Mammary epithelial cell (primary cell): ENCODE measurements at regions of chr15 and their contacts with region 1.

Region 1: GRCh38 chr15:31412824-31413223 is 86.2 kb downstream of the KLF13 start:
- DNase-seq: peak; percentile 56
- H3K4me3 ChIP-seq: no peak overlapping the region
- H3K27ac ChIP-seq: no peak overlapping the region
- H3K4me1 ChIP-seq: peaks cover 6% of the 10 kb centered on the region
- H3K27me3 ChIP-seq: no peaks in the 10 kb centered on the region
- CTCF ChIP-seq: no peak

Region 2: DNA sequence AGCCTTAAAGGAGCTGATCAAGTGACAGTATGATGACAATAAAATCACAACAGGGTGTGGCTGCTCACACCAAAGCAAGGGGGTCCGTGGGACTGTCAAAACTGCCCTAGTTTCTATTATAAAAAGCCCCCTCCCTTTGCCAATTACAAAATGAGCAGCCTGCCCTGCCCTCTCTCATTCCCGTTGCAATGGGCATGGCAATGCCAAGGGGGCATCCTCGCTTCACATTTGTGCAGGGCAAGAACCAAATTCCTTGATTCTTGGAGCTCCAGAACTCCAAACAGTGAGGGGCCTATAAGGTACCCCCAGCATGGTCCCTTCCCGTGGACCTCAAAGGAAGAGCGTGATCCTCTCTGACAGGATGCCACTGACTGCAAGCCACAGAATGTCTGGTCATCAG is 206.4 kb before region 1 on chr15:
- CTCF ChIA-PET with region 1: no interaction called
- dilution Hi-C with region 1: no loop called
- in situ Hi-C with region 1: no loop called
- intact Hi-C with region 1: no loop called
- DNase-seq: no peak
- H3K4me3 ChIP-seq: no peak overlapping the region
- H3K27ac ChIP-seq: no peak overlapping the region
- H3K4me1 ChIP-seq: no peaks in the 10 kb centered on the region
- H3K27me3 ChIP-seq: no peaks in the 10 kb centered on the region
- CTCF ChIP-seq: no peak

Region 3: GRCh38 chr15:31391687-31392671 is 20.8 kb before region 1 on chr15:
- CTCF ChIA-PET with region 1: no interaction called
- dilution Hi-C with region 1: no loop called
- in situ Hi-C with region 1: no loop called
- intact Hi-C with region 1: no loop called
- DNase-seq: peak; percentile 41
- H3K4me3 ChIP-seq: peak overlapping the region; percentile 63 to 79 (median 68)
- H3K27ac ChIP-seq: peak overlapping the region; percentile 12
- H3K4me1 ChIP-seq: peaks cover 30% of the 10 kb centered on the region
- H3K27me3 ChIP-seq: no peaks in the 10 kb centered on the region
- CTCF ChIP-seq: no peak

Region 4: DNA sequence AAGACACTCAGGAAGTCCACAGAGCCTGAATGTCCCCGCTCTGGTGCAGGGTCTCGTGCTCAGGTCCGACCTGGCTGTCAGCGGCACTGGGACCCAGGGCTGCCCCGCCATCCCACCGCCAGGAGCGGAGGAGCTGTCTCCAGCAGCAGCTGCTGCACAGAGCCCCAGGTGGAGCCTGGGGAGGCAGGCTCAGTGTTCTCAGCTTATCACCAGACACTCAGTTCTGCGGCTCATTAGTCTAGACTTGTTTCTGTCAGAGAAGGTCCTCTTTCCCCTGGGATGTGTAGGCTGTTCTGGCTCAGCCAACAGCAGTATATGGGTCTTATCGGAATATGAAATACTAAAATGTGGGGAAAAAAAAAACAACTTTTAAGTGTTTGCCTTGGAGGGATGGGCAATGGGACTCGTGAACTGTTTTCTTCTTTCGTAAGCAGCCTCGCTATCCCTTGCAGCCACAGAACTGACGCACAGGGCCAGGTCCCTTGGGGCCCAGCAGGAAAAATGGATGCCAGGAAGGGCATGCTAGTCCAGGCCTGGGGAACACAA is 10.2 kb before region 1 on chr15:
- CTCF ChIA-PET with region 1: no interaction called
- dilution Hi-C with region 1: no loop called
- in situ Hi-C with region 1: no loop called
- intact Hi-C with region 1: no loop called
- DNase-seq: no peak
- H3K4me3 ChIP-seq: no peak overlapping the region
- H3K27ac ChIP-seq: no peak overlapping the region
- H3K4me1 ChIP-seq: peaks cover 33% of the 10 kb centered on the region
- H3K27me3 ChIP-seq: no peaks in the 10 kb centered on the region
- CTCF ChIP-seq: no peak

Region 5: GRCh38 chr15:31458591-31459399 is 46.0 kb after region 1 on chr15:
- CTCF ChIA-PET with region 1: no interaction called
- dilution Hi-C with region 1: loop called (anchors 5 kb)
- in situ Hi-C with region 1: no loop called
- intact Hi-C with region 1: no loop called
- DNase-seq: peak; percentile 87
- H3K4me3 ChIP-seq: no peak overlapping the region
- H3K27ac ChIP-seq: no peak overlapping the region
- H3K4me1 ChIP-seq: peaks cover 31% of the 10 kb centered on the region
- H3K27me3 ChIP-seq: no peaks in the 10 kb centered on the region
- CTCF ChIP-seq: no peak

Region 6: GRCh38 chr15:31469786-31470525 is 57.1 kb after region 1 on chr15:
- CTCF ChIA-PET with region 1: no interaction called
- dilution Hi-C with region 1: no loop called
- in situ Hi-C with region 1: no loop called
- intact Hi-C with region 1: no loop called
- DNase-seq: no peak
- H3K4me3 ChIP-seq: no peak overlapping the region
- H3K27ac ChIP-seq: no peak overlapping the region
- H3K4me1 ChIP-seq: peaks cover 19% of the 10 kb centered on the region
- H3K27me3 ChIP-seq: no peaks in the 10 kb centered on the region
- CTCF ChIP-seq: no peak